Activated CD8-positive, alpha-beta T cell treated with anti-CD3 and anti-CD28 coated beads for 36 hours (primary cell): ENCODE measurements at regions of chr12 and their contacts with region 1.

Region 1: GRCh38 chr12:116737774-116738700 is at the starts of genes RNFT2 and SPRING1:
- DNase-seq: peak; percentile 99
- ATAC-seq: peak; percentile 99
- H3K4me3 Mint-ChIP-seq: peak within 1 kb of the TSS; percentile 91
- H3K27ac Mint-ChIP-seq: peak within 1 kb of the TSS; percentile 84
- H3K4me1 Mint-ChIP-seq: peaks cover 24% of the 10 kb centered on the region
- H3K27me3 Mint-ChIP-seq: no peaks in the 10 kb centered on the region
- CTCF ChIP-seq: peak; percentile 37
- total RNA-seq, gene RNFT2: 10.7 to 11.6 TPM
- total RNA-seq, gene SPRING1: 16.0 to 17.2 TPM

Region 2: GRCh38 chr12:116620492-116621191 is 117.4 kb before region 1 on chr12:
- CTCF ChIA-PET with region 1: no interaction called
- POLR2A ChIA-PET with region 1: no interaction called
- intact Hi-C with region 1: no loop called
- DNase-seq: no peak
- ATAC-seq: no peak
- H3K4me3 Mint-ChIP-seq: no peak overlapping the region
- H3K27ac Mint-ChIP-seq: no peak overlapping the region
- H3K4me1 Mint-ChIP-seq: no peaks in the 10 kb centered on the region
- H3K27me3 Mint-ChIP-seq: no peaks in the 10 kb centered on the region
- CTCF ChIP-seq: no peak

Region 3: GRCh38 chr12:116818948-116819832 is 81.2 kb after region 1 on chr12:
- CTCF ChIA-PET with region 1: no interaction called
- POLR2A ChIA-PET with region 1: no interaction called
- intact Hi-C with region 1: loop called (anchors 5 kb)
- DNase-seq: peak; percentile 90
- ATAC-seq: peak; percentile 95
- H3K4me3 Mint-ChIP-seq: peak overlapping the region; percentile 94
- H3K27ac Mint-ChIP-seq: peak overlapping the region; percentile 95
- H3K4me1 Mint-ChIP-seq: peaks cover 16% of the 10 kb centered on the region
- H3K27me3 Mint-ChIP-seq: no peaks in the 10 kb centered on the region
- CTCF ChIP-seq: no peak

Region 4: GRCh38 chr12:116924558-116925453 is 186.8 kb after region 1 on chr12:
- CTCF ChIA-PET with region 1: no interaction called
- POLR2A ChIA-PET with region 1: no interaction called
- intact Hi-C with region 1: loop called (anchors 10 kb)
- DNase-seq: peak; percentile 83
- ATAC-seq: peak; percentile 74
- H3K4me3 Mint-ChIP-seq: no peak overlapping the region
- H3K27ac Mint-ChIP-seq: peak overlapping the region; percentile 27
- H3K4me1 Mint-ChIP-seq: peaks cover 72% of the 10 kb centered on the region
- H3K27me3 Mint-ChIP-seq: no peaks in the 10 kb centered on the region
- CTCF ChIP-seq: no peak

Region 5: GRCh38 chr12:117134059-117134458 is 396.0 kb after region 1 on chr12:
- CTCF ChIA-PET with region 1: no interaction called
- POLR2A ChIA-PET with region 1: no interaction called
- intact Hi-C with region 1: loop called (anchors 10 kb)
- DNase-seq: peak; percentile 87
- ATAC-seq: peak; percentile 88
- H3K4me3 Mint-ChIP-seq: peak overlapping the region; percentile 23
- H3K27ac Mint-ChIP-seq: peak overlapping the region; percentile 88
- H3K4me1 Mint-ChIP-seq: peaks cover 18% of the 10 kb centered on the region
- H3K27me3 Mint-ChIP-seq: no peaks in the 10 kb centered on the region
- CTCF ChIP-seq: no peak